ENCODE measurements at regions of chr2 and their contacts with region 1.

Region 1: DNA sequence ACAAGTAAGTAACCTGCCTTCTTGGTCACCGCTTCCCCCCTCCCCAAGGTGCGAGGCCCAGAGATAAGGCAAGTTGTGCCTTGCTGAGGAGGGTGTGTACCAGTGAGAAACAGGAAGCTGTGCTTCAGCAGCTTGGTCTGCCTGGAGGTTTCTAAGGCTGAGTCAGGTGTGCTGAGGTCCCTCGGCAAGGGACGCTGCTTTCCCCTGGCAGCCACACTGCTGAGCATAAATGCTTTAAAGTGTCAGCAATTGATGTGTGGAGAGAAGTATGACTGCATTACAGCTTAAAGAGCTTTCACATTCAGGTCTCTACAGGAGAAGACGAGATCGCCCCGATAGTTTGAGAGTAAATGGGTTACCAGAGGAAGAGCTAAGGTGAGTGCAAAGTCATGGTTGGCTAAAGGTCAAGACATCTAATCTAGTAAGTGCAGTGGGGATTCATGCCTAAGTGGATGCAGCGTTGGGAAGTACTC is 86.9 kb downstream of the LIMS1 start:
- DNase-seq: peak; percentile 90
- H3K4me3 ChIP-seq: peak overlapping the region; percentile 71
- H3K27ac ChIP-seq: peak overlapping the region; percentile 93
- H3K4me1 ChIP-seq: peaks cover 76% of the 10 kb centered on the region
- CTCF ChIP-seq: no peak

Region 2: GRCh38 chr2:108607706-108608301 is 13.3 kb before region 1 on chr2:
- CTCF ChIA-PET with region 1: interaction called, 4 read pairs
- POLR2A ChIA-PET with region 1: interaction called, 356 read pairs
- intact Hi-C with region 1: loop called (anchors 1 kb)
- DNase-seq: peak; percentile 81
- H3K4me3 ChIP-seq: no peak overlapping the region
- H3K27ac ChIP-seq: no peak overlapping the region
- H3K4me1 ChIP-seq: peaks cover 50% of the 10 kb centered on the region
- CTCF ChIP-seq: peak; percentile 97

Region 3: GRCh38 chr2:108637304-108637669 is 16.2 kb after region 1 on chr2:
- CTCF ChIA-PET with region 1: interaction called, 24 read pairs
- POLR2A ChIA-PET with region 1: interaction called, 356 read pairs
- intact Hi-C with region 1: no loop called
- DNase-seq: no peak
- H3K4me3 ChIP-seq: no peak overlapping the region
- H3K27ac ChIP-seq: no peak overlapping the region
- H3K4me1 ChIP-seq: peaks cover 45% of the 10 kb centered on the region
- CTCF ChIP-seq: no peak

Region 4: GRCh38 chr2:108719149-108720044 is 98.3 kb after region 1 on chr2 and contains the start of gene RANBP2:
- CTCF ChIA-PET with region 1: no interaction called
- POLR2A ChIA-PET with region 1: no interaction called
- intact Hi-C with region 1: loop called (anchors 5 kb)
- DNase-seq: peak; percentile 97
- H3K4me3 ChIP-seq: peak within 1 kb of the TSS; percentile 75
- H3K27ac ChIP-seq: peak within 1 kb of the TSS; percentile 30
- H3K4me1 ChIP-seq: peaks cover 21% of the 10 kb centered on the region
- CTCF ChIP-seq: no peak
- total RNA-seq, gene RANBP2: 48.4 and 51.3 TPM in 2 replicates

Region 5: DNA sequence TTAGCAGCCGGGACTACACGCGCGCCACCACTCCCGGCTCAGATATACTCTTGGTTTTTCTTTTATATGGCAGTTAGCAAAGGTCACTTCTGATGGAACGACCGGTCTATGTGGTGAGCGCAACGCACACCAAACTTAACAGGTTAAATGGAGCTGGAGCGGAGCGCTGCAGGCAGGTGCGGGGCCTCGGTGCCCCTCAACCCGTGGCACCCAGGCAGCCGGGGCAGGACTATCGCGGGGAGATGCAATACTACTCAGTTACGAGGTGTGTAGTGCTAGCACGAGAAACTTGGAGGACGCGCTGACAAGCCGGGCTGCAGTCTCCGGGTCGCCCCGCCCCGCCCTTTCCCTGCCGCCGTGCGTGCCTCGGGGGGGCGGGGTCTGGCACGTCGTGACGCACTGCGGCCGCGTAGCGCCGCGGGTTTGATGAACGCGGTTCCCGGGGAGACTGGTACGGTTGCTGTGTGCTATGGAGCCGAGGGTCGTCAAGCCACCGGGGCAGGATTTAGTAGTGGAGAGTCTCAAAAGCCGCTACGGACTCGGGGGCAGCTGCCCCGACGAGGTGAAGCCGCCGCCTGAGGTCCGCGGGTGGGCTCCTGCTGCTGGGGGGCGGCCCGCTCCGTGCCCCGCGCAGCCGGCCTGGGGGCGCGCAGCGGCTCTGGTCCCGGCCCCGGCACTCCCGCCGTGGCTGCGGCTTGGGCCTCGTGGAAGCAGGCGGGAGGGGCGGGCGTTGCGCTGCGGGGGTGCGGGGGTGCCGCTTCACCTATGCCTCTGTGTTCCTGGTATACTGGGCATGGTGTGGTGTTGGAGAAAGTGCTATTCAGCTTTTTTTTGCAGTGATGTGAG is 165.5 kb after region 1 on chr2 and contains the start of gene CCDC138:
- CTCF ChIA-PET with region 1: no interaction called
- POLR2A ChIA-PET with region 1: interaction called, 6 read pairs
- intact Hi-C with region 1: loop called (anchors 5 kb)
- DNase-seq: peak; percentile 94
- H3K4me3 ChIP-seq: peak within 1 kb of the TSS; percentile 86
- H3K27ac ChIP-seq: peak within 1 kb of the TSS; percentile 67
- H3K4me1 ChIP-seq: peaks cover 8% of the 10 kb centered on the region
- CTCF ChIP-seq: 0 out of 2 replicates have a peak, but pooled peaks have one; percentile 14
- total RNA-seq, gene CCDC138: 28.1 and 28.9 TPM in 2 replicates